GM12878 (cell line): ENCODE measurements at regions of chr2 and their contacts with region 1.

Region 1: GRCh38 chr2:241149925-241150659 is at the start of gene PPP1R7:
- DNase-seq: peak; percentile 76
- ATAC-seq: peak; percentile 88
- H3K4me3 ChIP-seq: peak within 1 kb of the TSS; percentile 74
- H3K27ac ChIP-seq: peak within 1 kb of the TSS; percentile 65
- H3K4me1 ChIP-seq: peaks cover 23% of the 10 kb centered on the region
- H3K27me3 ChIP-seq: no peaks in the 10 kb centered on the region
- CTCF ChIP-seq: peak; percentile 33 to 57 (median 42); a peak in 5 of 6 replicates
- EP300 ChIP-seq: no peak
- POLR2A ChIP-seq: peak; percentile 91
- RAD21 ChIP-seq: peak; percentile 63
- polyA plus RNA-seq, gene PPP1R7: 81.4 to 82.8 TPM

Region 2: DNA sequence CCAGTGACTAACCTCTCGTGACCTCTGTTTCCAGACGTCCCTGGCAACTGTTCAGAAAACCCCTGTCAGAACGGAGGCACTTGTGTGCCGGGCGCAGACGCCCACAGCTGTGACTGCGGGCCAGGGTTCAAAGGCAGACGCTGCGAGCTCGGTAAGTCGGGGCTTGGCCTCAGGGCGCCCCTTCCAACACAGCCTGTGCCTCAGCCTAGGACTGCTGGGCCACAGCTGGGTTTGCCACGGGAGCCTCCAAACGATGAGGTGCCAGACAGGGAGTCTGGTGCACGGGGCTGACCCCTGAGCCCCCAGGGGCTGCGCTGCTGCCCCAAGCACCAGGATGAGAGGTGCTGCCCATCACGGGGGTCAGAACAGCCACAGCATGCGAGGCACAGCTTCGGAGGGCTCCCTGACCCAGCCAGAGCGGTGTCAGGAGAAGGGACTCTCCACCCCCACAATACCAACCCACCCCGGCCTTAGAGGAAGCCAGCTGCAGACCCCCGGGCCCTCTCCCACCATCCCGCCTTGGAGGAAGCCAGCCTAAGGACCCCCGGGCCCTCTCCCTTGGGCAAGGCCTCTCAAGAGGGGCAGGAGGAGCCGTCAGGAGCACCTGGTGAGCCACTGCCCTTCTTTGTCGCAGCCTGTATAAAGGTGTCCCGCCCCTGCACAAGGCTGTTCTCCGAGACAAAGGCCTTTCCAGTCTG is 68.3 kb before region 1 on chr2:
- CTCF ChIA-PET with region 1: interaction called, 36 read pairs
- POLR2A ChIA-PET with region 1: interaction called, 6 read pairs
- RAD21 ChIA-PET with region 1: interaction called, 33 read pairs
- SMC1A ChIA-PET with region 1: interaction called, 49 read pairs
- in situ Hi-C with region 1: no loop called
- intact Hi-C with region 1: loop called (anchors 10 kb)
- DNase-seq: no peak
- ATAC-seq: no peak
- H3K4me3 ChIP-seq: no peak overlapping the region
- H3K27ac ChIP-seq: no peak overlapping the region
- H3K4me1 ChIP-seq: no peaks in the 10 kb centered on the region; the same call in 1 of the 2 replicates
- H3K27me3 ChIP-seq: no peaks in the 10 kb centered on the region
- CTCF ChIP-seq: no peak
- EP300 ChIP-seq: no peak
- POLR2A ChIP-seq: 0 out of 2 replicates have a peak, but pooled peaks have one; percentile 16
- RAD21 ChIP-seq: no peak

Region 3: DNA sequence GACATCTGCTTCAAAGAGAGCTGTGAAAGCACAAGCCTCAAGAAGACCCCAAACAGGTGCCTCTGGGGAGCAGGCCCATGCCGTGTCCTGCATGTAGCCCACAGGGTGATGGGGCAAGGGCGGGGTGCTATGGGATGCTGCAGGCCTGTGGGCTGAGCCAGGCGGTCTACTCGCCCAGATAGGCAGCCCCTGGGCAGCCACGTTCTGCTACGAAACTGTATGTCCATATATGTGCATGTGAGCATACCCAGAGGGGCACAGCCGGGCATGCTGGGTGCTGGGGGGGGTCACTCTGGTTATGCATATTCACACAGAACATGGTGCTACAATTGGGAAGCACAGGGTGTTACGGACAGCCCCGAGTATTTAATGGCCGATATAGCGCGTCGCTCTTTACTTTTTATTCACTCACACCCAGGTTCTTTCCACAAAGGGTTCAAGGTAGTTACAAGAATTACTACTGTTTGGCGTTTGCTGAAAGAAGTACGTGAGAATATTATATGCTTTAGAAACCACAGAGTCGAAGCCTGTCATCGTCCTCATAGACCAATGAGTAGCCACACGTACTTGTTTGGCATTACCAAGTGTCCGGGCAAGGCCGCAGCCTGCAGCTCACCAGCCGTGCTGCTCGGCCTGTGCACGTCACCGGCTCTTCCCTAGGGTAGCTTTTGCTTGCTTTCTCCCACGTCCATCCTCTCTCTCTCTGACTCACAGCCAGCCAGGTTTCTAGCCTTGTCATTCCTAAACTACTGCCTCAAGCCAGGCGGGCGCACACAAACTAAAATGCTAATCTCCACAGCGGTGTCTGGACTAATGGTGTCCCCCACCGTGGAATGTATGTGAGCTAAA is 62.4 kb before region 1 on chr2:
- CTCF ChIA-PET with region 1: interaction called, 4 read pairs
- POLR2A ChIA-PET with region 1: interaction called, 12 read pairs
- RAD21 ChIA-PET with region 1: interaction called, 13 read pairs
- SMC1A ChIA-PET with region 1: interaction called, 9 read pairs
- in situ Hi-C with region 1: no loop called
- intact Hi-C with region 1: loop called (anchors 10 kb)
- DNase-seq: peak; percentile 78
- ATAC-seq: peak; percentile 88
- H3K4me3 ChIP-seq: no peak overlapping the region
- H3K27ac ChIP-seq: peak overlapping the region; percentile 88
- H3K4me1 ChIP-seq: peaks cover 19% of the 10 kb centered on the region
- H3K27me3 ChIP-seq: no peaks in the 10 kb centered on the region
- CTCF ChIP-seq: no peak
- EP300 ChIP-seq: peak; percentile 78 to 92; a peak in 3 of 4 replicates
- POLR2A ChIP-seq: no peak; the same call in 1 of the 2 replicates
- RAD21 ChIP-seq: no peak

Region 4: GRCh38 chr2:241110607-241111439 is 39.3 kb before region 1 on chr2:
- CTCF ChIA-PET with region 1: interaction called, 8 read pairs
- POLR2A ChIA-PET with region 1: interaction called, 16 read pairs
- RAD21 ChIA-PET with region 1: interaction called, 26 read pairs
- SMC1A ChIA-PET with region 1: interaction called, 45 read pairs
- in situ Hi-C with region 1: no loop called
- intact Hi-C with region 1: no loop called
- DNase-seq: no peak
- ATAC-seq: peak; percentile 79
- H3K4me3 ChIP-seq: peak overlapping the region; percentile 11; the same call in 1 of the 2 replicates
- H3K27ac ChIP-seq: peak overlapping the region; percentile 82
- H3K4me1 ChIP-seq: peaks cover 33% of the 10 kb centered on the region
- H3K27me3 ChIP-seq: no peaks in the 10 kb centered on the region
- CTCF ChIP-seq: no peak
- EP300 ChIP-seq: no peak
- POLR2A ChIP-seq: peak; percentile 63
- RAD21 ChIP-seq: no peak

Region 5: GRCh38 chr2:241123816-241124536 is 26.1 kb before region 1 on chr2:
- CTCF ChIA-PET with region 1: interaction called, 5 read pairs
- POLR2A ChIA-PET with region 1: interaction called, 5 read pairs
- RAD21 ChIA-PET with region 1: interaction called, 3 read pairs
- SMC1A ChIA-PET with region 1: interaction called, 3 read pairs
- in situ Hi-C with region 1: no loop called
- intact Hi-C with region 1: loop called (anchors 2 kb)
- DNase-seq: no peak
- ATAC-seq: no peak
- H3K4me3 ChIP-seq: no peak overlapping the region
- H3K27ac ChIP-seq: no peak overlapping the region
- H3K4me1 ChIP-seq: peaks cover 35% of the 10 kb centered on the region
- H3K27me3 ChIP-seq: no peaks in the 10 kb centered on the region
- CTCF ChIP-seq: no peak
- EP300 ChIP-seq: no peak
- POLR2A ChIP-seq: no peak
- RAD21 ChIP-seq: no peak

Region 6: DNA sequence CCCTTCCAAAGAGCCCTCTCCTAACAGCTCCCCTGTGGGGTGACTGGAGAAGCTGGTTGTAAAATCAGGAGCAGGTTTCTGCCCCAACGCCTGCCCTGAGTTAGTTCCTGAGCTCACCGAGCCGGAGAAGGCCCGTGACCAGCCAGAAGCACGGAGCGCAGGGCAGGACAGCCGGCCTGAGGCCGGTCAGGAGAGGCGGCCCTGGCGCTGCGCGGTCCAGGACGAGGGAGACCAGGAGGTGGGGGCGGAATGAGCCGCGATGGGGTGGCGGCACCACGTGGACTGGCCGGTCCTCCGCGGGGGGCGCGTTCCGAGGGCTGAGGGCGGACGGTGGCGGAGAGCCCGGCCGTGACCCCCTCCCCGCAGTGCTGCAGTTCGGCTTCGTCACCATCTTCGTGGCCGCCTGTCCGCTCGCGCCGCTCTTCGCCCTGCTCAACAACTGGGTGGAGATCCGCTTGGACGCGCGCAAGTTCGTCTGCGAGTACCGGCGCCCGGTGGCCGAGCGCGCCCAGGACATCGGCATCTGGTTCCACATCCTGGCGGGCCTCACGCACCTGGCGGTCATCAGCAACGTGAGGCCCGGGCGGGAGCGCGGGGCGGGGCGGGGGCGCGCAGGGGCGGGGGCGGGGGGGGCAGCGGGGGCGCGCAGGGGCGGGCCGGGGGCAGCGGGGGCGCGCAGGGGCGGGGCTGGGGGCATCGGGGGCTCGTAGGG is 67.4 kb after region 1 on chr2:
- CTCF ChIA-PET with region 1: interaction called, 3 read pairs
- POLR2A ChIA-PET with region 1: no interaction called
- RAD21 ChIA-PET with region 1: interaction called, 12 read pairs
- SMC1A ChIA-PET with region 1: interaction called, 4 read pairs
- in situ Hi-C with region 1: no loop called
- intact Hi-C with region 1: no loop called
- DNase-seq: no peak
- ATAC-seq: peak; percentile 80
- H3K4me3 ChIP-seq: peak overlapping the region; percentile 64
- H3K27ac ChIP-seq: no peak overlapping the region
- H3K4me1 ChIP-seq: no peaks in the 10 kb centered on the region
- H3K27me3 ChIP-seq: no peaks in the 10 kb centered on the region
- CTCF ChIP-seq: peak in 1 of 3 experiments; percentile 5; a peak in 1 of 6 replicates
- EP300 ChIP-seq: no peak
- POLR2A ChIP-seq: no peak
- RAD21 ChIP-seq: no peak